SK-N-SH (cell line): ENCODE measurements at regions of chr16 and their contacts with region 1.

Region 1: DNA sequence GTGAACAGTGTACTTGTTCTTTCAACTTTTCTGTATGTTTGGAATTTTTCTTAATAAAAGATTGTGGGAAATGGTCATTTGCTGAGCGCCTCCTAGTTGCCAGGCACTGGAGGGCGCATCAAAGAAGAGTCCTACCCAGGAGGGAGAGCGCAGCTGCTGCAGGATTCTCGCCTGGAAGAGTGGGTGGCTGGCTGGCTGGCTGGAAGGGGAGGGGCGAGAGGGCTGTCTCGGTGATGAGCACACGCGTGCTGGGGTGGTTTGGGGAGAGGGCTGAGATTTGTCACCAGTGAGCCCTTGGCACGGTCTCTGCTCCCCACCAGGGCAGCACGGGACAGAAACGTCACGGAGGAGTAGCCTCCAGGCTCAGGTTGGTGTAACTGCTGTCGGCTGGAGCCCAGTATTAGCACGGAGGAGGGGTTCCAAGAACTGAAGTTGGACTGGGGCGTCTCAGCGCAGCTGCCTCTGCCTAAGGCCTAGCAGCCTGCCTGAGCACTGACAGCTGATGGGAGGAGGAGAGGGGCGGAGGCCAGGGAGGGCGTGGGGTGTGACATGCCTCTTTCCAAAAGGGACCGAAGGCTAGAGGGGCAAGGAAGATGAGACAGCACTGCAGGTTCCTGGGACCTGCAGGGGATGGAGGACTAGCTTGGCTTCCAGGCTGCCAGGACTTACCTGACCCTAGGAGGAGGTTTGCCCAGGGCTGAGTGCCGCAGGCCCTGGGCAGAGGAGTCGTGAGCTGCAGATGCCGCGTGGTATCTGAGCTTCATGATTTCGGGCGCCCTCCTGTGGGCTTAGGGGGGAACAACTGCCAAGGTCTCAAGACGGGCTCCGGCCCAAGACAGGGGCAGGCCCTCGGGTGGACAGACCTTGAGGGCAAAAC is 5.7 kb downstream of the LDHD start:
- DNase-seq: peak; percentile 91
- H3K4me3 ChIP-seq: peak overlapping the region; percentile 18 to 37; a peak in 3 of 4 replicates
- H3K27ac ChIP-seq: peak overlapping the region; percentile 73 to 86
- H3K4me1 ChIP-seq: peaks cover 36 to 50% of the 10 kb centered on the region in 2 experiments; a peak in 3 of 4 replicates
- H3K27me3 ChIP-seq: no peaks in the 10 kb centered on the region
- CTCF ChIP-seq: peak; percentile 86
- EP300 ChIP-seq: no peak
- RAD21 ChIP-seq: peak; percentile 91

Region 2: DNA sequence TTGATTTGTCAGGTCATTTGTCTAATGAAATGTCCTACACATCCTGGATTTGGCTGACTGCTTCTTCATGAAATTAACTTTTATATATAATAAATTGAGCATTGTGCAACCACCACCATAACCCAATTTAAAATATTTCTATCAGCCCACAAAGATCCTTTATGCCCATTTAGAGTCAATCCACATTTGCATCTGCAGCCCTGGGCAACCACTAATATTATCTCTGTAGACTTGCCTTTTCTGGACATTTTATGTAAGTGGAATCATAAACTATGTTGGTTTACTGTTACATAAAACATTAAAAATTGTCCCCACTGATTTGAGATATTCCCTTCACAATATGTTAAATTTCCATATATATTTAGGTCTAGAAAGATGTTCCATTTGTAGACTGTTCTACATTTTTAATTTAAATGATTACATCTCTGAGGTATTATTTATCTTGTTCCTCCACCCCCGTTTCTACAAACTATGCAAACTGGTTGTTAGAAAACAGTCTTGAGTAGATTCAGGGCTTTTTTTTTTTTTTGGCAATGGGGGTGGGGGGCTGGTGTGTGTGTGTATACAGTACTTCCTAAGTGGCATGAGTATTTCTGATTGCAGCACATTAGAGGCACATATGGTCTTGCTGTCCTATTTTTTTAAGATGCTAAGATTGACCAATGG is 460.9 kb before region 1 on chr16:
- CTCF ChIA-PET with region 1: no interaction called
- POLR2A ChIA-PET with region 1: no interaction called
- DNase-seq: no peak
- H3K4me3 ChIP-seq: no peak overlapping the region
- H3K27ac ChIP-seq: 0 out of 4 replicates have a peak overlapping the region, but pooled peaks of 1 of the 2 experiments have one; percentile 3
- H3K4me1 ChIP-seq: no peaks in the 10 kb centered on the region
- H3K27me3 ChIP-seq: no peaks in the 10 kb centered on the region
- CTCF ChIP-seq: no peak
- EP300 ChIP-seq: no peak
- RAD21 ChIP-seq: no peak

Region 3: GRCh38 chr16:74991593-74992403 is 119.1 kb before region 1 on chr16:
- CTCF ChIA-PET with region 1: interaction called, 182 read pairs
- POLR2A ChIA-PET with region 1: no interaction called
- DNase-seq: peak; percentile 32
- H3K4me3 ChIP-seq: no peak overlapping the region
- H3K27ac ChIP-seq: no peak overlapping the region
- H3K4me1 ChIP-seq: peaks cover 0 to 2% of the 10 kb centered on the region in 2 experiments; a peak in 1 of 4 replicates
- H3K27me3 ChIP-seq: no peaks in the 10 kb centered on the region
- CTCF ChIP-seq: no peak
- EP300 ChIP-seq: no peak
- RAD21 ChIP-seq: no peak

Region 4: DNA sequence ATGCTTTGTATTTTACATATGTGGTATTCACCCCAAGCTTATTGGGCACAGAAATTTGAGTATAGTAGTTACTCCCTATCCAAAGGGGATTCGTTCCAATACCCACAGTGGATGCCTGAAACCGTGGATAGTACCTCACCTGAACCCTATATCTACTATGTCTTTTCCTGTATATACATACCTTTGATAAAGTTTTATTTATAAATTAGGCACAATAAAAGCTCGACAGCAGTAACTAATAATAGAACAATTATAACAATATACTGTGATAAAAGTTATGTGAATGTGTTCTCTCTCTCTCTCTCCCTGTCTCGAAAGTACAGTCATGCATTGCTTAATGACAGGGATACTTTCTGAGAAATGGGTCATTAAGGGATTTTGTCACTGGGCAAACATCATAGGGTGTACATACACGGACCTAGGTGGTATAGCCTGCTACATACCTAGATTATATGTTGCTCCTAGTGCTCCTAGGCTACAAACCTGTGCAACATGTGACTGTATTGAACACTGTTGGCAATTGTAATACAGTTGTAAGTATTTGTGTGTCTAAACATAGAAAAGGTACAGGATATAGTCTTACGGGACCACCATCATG is 105.3 kb before region 1 on chr16:
- CTCF ChIA-PET with region 1: interaction called, 30 read pairs
- POLR2A ChIA-PET with region 1: no interaction called
- DNase-seq: no peak
- H3K4me3 ChIP-seq: no peak overlapping the region
- H3K27ac ChIP-seq: no peak overlapping the region
- H3K4me1 ChIP-seq: peaks cover 0 to 20% of the 10 kb centered on the region in 2 experiments; a peak in 3 of 4 replicates
- H3K27me3 ChIP-seq: no peaks in the 10 kb centered on the region
- CTCF ChIP-seq: no peak
- EP300 ChIP-seq: no peak
- RAD21 ChIP-seq: no peak

Region 5: GRCh38 chr16:75070012-75070941 is 40.6 kb before region 1 on chr16:
- CTCF ChIA-PET with region 1: interaction called, 12 read pairs
- POLR2A ChIA-PET with region 1: interaction called, 5 read pairs
- DNase-seq: peak; percentile 86
- H3K4me3 ChIP-seq: no peak overlapping the region
- H3K27ac ChIP-seq: peak overlapping the region in 1 of 2 experiments; percentile 93; a peak in 2 of 4 replicates
- H3K4me1 ChIP-seq: peaks cover 9 to 52% of the 10 kb centered on the region in 2 experiments; a peak in 2 of 4 replicates
- H3K27me3 ChIP-seq: no peaks in the 10 kb centered on the region
- CTCF ChIP-seq: no peak
- EP300 ChIP-seq: peak in 1 of 2 experiments; percentile 83; a peak in 2 of 4 replicates
- RAD21 ChIP-seq: peak; percentile 23

Region 6: GRCh38 chr16:75099756-75100602 is 10.9 kb before region 1 on chr16:
- CTCF ChIA-PET with region 1: interaction called, 56 read pairs
- POLR2A ChIA-PET with region 1: no interaction called
- DNase-seq: peak; percentile 29
- H3K4me3 ChIP-seq: no peak overlapping the region
- H3K27ac ChIP-seq: 0 out of 4 replicates have a peak overlapping the region, but pooled peaks of 1 of the 2 experiments have one; percentile 29
- H3K4me1 ChIP-seq: peaks cover 17 to 36% of the 10 kb centered on the region in 2 experiments; a peak in 3 of 4 replicates
- H3K27me3 ChIP-seq: no peaks in the 10 kb centered on the region
- CTCF ChIP-seq: no peak
- EP300 ChIP-seq: no peak
- RAD21 ChIP-seq: no peak

Region 7: DNA sequence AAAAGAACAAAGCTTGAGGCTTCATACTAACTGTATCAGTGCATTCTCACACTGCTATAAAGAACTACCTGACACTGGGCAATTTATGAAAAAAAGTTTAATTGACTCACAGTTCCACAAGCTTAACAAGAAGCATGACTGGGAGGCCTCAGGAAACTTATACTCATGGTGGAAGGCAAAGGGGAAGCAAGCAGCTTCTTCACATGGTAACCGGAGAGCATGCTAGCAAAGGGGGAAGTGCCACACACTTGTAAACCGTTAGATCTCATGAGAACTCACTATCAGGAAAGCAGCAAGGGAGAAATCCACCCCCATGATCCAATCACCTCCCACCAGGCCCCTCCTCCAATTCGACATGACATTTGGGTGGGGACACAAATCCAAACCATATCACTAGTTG is 70.8 kb after region 1 on chr16:
- CTCF ChIA-PET with region 1: no interaction called
- POLR2A ChIA-PET with region 1: no interaction called
- DNase-seq: no peak
- H3K4me3 ChIP-seq: no peak overlapping the region
- H3K27ac ChIP-seq: no peak overlapping the region
- H3K4me1 ChIP-seq: no peaks in the 10 kb centered on the region
- H3K27me3 ChIP-seq: no peaks in the 10 kb centered on the region
- CTCF ChIP-seq: no peak
- EP300 ChIP-seq: no peak
- RAD21 ChIP-seq: no peak

Region 8: GRCh38 chr16:75218256-75219070 is 107.6 kb after region 1 on chr16 and contains the start of gene CTRB1:
- CTCF ChIA-PET with region 1: no interaction called
- POLR2A ChIA-PET with region 1: no interaction called
- DNase-seq: peak; percentile 57
- H3K4me3 ChIP-seq: no peak within 1 kb of the TSS
- H3K27ac ChIP-seq: peak within 1 kb of the TSS in 1 of 2 experiments; percentile 12; a peak in 1 of 4 replicates
- H3K4me1 ChIP-seq: peaks cover 0 to 6% of the 10 kb centered on the region in 2 experiments; a peak in 1 of 4 replicates
- H3K27me3 ChIP-seq: no peaks in the 10 kb centered on the region
- CTCF ChIP-seq: no peak
- EP300 ChIP-seq: no peak
- RAD21 ChIP-seq: no peak
- polyA plus RNA-seq, gene CTRB1: not detected in 2 replicates